PC-3 (cell line): ENCODE measurements at regions of chr7 and their contacts with region 1.

Region 1: GRCh38 chr7:28096713-28097112 is 83.9 kb downstream of the JAZF1 start:
- DNase-seq: peak; percentile 71
- ATAC-seq: peak; percentile 66
- H3K4me3 ChIP-seq: no peak overlapping the region
- H3K27ac ChIP-seq: no peak overlapping the region
- H3K4me1 ChIP-seq: no peaks in the 10 kb centered on the region
- H3K27me3 ChIP-seq: no peaks in the 10 kb centered on the region
- CTCF ChIP-seq: peak; percentile 88

Region 2: DNA sequence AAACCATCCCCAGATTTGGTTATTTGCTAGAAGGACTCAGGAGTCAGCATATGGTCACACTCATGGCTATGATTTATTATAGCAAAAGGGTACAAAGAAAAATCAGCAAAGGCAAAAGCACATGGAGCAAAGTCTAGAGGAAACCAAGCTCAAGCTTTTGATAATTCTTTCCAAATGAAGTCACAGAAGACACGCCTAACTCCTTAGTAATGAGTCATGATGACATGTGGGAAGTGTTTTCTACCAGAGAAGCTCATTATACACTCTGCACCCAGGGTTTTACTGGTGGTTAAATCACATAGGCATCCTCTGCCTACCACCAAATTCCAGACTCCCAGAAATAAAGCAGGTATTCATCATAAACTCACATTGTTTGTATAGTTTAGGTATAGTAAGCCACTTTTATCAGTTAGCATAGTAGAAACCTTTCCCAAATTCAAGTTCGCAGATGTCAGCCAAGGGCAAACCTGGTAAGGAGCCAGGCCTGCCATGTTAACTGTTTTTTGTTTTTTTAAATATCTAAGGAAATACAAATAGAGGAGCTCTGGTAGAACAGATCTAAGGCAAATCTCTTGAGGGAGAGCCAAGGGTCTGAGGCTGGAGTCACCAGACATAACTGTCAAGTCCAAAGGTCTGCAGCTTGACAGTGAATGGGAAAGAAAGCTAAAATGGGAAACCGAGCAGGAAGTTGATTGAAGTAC is 418.7 kb before region 1 on chr7:
- CTCF ChIA-PET with region 1: no interaction called
- POLR2A ChIA-PET with region 1: interaction called, 20 read pairs
- intact Hi-C with region 1: no loop called
- DNase-seq: peak; percentile 95
- ATAC-seq: peak; percentile 96
- H3K4me3 ChIP-seq: peak overlapping the region; percentile 34; the same call in 1 of the 2 replicates
- H3K27ac ChIP-seq: peak overlapping the region; percentile 100
- H3K4me1 ChIP-seq: peaks cover 31% of the 10 kb centered on the region
- H3K27me3 ChIP-seq: no peaks in the 10 kb centered on the region
- CTCF ChIP-seq: no peak

Region 3: GRCh38 chr7:27784393-27785053 is 312.2 kb before region 1 on chr7:
- CTCF ChIA-PET with region 1: interaction called, 3 read pairs
- POLR2A ChIA-PET with region 1: no interaction called
- intact Hi-C with region 1: loop called (anchors 10 kb)
- DNase-seq: peak; percentile 96
- ATAC-seq: peak; percentile 97
- H3K4me3 ChIP-seq: no peak overlapping the region
- H3K27ac ChIP-seq: no peak overlapping the region
- H3K4me1 ChIP-seq: peaks cover 24% of the 10 kb centered on the region
- H3K27me3 ChIP-seq: no peaks in the 10 kb centered on the region
- CTCF ChIP-seq: peak; percentile 75

Region 4: DNA sequence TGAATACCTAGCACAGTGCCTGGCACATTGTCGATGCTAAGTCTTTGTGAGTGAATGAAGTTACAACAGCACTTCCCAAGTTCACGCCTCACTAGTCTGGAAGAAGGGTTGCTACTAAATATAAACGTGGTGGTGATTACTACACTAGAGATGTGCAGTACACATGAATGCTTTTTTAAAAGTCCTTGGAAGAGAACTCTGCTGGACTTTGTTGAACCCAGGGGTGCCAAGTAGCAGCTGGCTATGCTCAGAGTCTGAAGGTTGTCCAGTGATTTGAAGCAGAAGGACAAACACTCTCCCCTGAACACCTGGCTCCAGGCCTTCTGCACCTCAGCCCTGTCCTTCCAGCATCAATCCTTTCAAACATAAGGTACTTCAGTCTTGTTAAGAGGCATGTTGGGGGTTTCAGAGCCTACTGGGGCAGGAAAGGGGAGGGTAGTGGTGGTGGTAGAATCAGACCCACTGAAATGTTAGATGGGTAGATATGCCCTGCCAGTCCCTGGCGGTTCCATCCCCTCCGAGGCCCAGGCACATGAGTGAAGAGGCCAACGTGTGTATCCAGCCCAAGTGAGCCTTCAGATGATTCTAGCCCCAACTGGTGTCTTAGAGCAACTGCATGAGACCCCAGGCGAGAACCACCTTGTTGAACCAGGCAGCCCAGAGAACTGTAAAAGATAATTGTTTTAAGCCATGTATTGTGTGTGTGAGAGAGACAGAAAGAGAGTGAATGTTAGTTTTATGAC is 262.4 kb before region 1 on chr7:
- CTCF ChIA-PET with region 1: interaction called, 3 read pairs
- POLR2A ChIA-PET with region 1: no interaction called
- intact Hi-C with region 1: loop called (anchors 10 kb)
- DNase-seq: no peak
- ATAC-seq: no peak
- H3K4me3 ChIP-seq: no peak overlapping the region
- H3K27ac ChIP-seq: no peak overlapping the region
- H3K4me1 ChIP-seq: no peaks in the 10 kb centered on the region
- H3K27me3 ChIP-seq: no peaks in the 10 kb centered on the region
- CTCF ChIP-seq: no peak

Region 5: DNA sequence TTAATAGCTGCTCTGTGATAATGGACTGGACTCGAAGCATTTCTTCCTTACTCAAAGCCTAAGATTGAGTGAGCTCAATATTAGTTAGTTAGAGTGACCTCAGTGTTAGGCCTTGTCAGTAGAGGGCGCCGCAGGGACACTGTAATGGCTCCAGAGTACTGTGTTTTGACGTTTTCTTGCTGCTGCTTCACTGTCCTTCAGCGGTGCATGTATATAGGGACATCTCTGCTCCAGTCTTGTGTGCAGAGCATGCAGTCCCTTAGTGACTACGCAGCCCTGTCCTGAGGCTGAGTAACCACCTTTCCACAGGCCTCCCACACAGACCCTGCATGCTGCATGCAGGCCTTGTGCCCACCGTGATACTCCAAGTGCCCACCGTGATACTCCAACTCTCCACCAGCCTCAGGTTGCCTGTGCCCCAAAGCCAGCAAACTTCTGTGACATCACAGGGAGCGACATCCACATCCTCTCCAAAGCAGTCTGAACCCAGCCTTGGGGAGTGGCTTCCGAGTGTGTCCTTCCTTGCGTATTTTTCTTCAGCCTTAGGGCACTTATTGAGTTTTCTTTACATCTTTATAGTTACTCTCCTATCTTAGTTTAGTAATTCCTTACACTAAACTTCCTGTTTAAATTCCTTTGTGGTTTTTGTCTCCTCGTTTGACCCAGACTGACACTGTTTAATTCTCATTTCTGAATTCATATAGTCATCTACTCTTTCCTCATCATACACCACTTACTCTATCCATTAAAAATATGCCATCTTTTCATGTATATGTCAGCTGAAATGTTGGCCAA is 34.3 kb before region 1 on chr7:
- CTCF ChIA-PET with region 1: interaction called, 22 read pairs
- POLR2A ChIA-PET with region 1: no interaction called
- intact Hi-C with region 1: no loop called
- DNase-seq: peak; percentile 73
- ATAC-seq: peak; percentile 89
- H3K4me3 ChIP-seq: peak overlapping the region; percentile 9; the same call in 1 of the 2 replicates
- H3K27ac ChIP-seq: peak overlapping the region; percentile 63
- H3K4me1 ChIP-seq: peaks cover 29% of the 10 kb centered on the region
- H3K27me3 ChIP-seq: no peaks in the 10 kb centered on the region
- CTCF ChIP-seq: peak; percentile 85

Region 6: GRCh38 chr7:28165961-28166955 is 69.5 kb after region 1 on chr7:
- CTCF ChIA-PET with region 1: no interaction called
- POLR2A ChIA-PET with region 1: no interaction called
- intact Hi-C with region 1: loop called (anchors 5 kb)
- DNase-seq: peak; percentile 66
- ATAC-seq: peak; percentile 93
- H3K4me3 ChIP-seq: no peak overlapping the region
- H3K27ac ChIP-seq: peak overlapping the region; percentile 5; the same call in 1 of the 2 replicates
- H3K4me1 ChIP-seq: peaks cover 30% of the 10 kb centered on the region
- H3K27me3 ChIP-seq: no peaks in the 10 kb centered on the region
- CTCF ChIP-seq: no peak